Activated CD4-positive, alpha-beta T cell treated with anti-CD3 and anti-CD28 coated beads for 36 hours (primary cell): ENCODE measurements at regions of chr11 and their contacts with region 1.

Region 1: GRCh38 chr11:66958232-66958955 is at the start of gene PC:
- DNase-seq: peak; percentile 99
- ATAC-seq: peak; percentile 98
- H3K4me3 Mint-ChIP-seq: peak within 1 kb of the TSS; percentile 78
- H3K27ac Mint-ChIP-seq: peak within 1 kb of the TSS; percentile 90
- H3K4me1 Mint-ChIP-seq: peaks cover 18% of the 10 kb centered on the region
- H3K27me3 Mint-ChIP-seq: no peaks in the 10 kb centered on the region
- total RNA-seq, gene PC: 9.2 to 9.3 TPM

Region 2: DNA sequence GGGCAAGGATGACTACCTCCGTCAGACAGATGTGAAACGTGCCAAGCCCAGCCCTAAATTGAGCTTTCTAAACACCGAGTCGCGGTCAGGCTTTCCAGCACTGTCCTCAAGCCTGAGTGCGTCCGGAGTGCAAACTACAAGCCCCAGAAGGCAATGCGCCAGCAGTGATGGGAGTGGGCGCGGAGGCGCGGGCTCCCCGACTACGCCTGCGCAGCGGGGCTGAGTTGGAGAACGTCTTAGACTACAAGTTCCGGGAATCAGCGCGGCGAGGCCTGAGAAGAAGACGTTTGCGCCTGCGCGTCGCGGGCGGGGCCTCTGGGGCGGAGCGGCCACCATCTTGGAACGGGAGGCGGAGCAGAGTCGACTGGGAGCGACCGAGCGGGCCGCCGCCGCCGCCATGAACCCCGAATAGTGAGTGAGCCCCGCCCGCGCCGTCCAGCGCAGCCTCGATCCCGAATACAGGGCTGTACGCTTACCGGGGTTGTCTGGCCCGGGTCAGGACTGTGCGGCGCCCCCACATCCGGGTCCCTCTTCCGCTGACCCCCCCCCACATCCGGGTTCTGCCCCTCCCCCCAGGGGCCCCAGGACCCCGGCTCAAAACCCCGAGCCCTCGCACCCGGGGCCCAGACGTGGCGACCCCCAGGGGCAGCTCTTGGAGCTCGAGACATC is 690.0 kb before region 1 on chr11 and contains the start of gene RAB1B:
- CTCF ChIA-PET with region 1: no interaction called
- POLR2A ChIA-PET with region 1: no interaction called
- intact Hi-C with region 1: loop called in 1 of 2 experiments (anchors 2 kb)
- DNase-seq: peak; percentile 100
- ATAC-seq: peak; percentile 88
- H3K4me3 Mint-ChIP-seq: peak within 1 kb of the TSS; percentile 100
- H3K27ac Mint-ChIP-seq: peak within 1 kb of the TSS; percentile 97
- H3K4me1 Mint-ChIP-seq: peaks cover 28% of the 10 kb centered on the region
- H3K27me3 Mint-ChIP-seq: no peaks in the 10 kb centered on the region
- total RNA-seq, gene RAB1B: 114 to 147 TPM

Region 3: GRCh38 chr11:66510271-66510989 is 448.0 kb before region 1 on chr11 and contains the start of gene BBS1:
- CTCF ChIA-PET with region 1: interaction called, 3 read pairs
- POLR2A ChIA-PET with region 1: no interaction called
- intact Hi-C with region 1: loop called in 1 of 2 experiments (anchors 1 kb)
- DNase-seq: peak; percentile 88
- ATAC-seq: peak; percentile 98
- H3K4me3 Mint-ChIP-seq: peak within 1 kb of the TSS; percentile 86
- H3K27ac Mint-ChIP-seq: peak within 1 kb of the TSS; percentile 48
- H3K4me1 Mint-ChIP-seq: peaks cover 10% of the 10 kb centered on the region
- H3K27me3 Mint-ChIP-seq: no peaks in the 10 kb centered on the region
- total RNA-seq, gene BBS1: 9.4 to 10.7 TPM

Region 4: DNA sequence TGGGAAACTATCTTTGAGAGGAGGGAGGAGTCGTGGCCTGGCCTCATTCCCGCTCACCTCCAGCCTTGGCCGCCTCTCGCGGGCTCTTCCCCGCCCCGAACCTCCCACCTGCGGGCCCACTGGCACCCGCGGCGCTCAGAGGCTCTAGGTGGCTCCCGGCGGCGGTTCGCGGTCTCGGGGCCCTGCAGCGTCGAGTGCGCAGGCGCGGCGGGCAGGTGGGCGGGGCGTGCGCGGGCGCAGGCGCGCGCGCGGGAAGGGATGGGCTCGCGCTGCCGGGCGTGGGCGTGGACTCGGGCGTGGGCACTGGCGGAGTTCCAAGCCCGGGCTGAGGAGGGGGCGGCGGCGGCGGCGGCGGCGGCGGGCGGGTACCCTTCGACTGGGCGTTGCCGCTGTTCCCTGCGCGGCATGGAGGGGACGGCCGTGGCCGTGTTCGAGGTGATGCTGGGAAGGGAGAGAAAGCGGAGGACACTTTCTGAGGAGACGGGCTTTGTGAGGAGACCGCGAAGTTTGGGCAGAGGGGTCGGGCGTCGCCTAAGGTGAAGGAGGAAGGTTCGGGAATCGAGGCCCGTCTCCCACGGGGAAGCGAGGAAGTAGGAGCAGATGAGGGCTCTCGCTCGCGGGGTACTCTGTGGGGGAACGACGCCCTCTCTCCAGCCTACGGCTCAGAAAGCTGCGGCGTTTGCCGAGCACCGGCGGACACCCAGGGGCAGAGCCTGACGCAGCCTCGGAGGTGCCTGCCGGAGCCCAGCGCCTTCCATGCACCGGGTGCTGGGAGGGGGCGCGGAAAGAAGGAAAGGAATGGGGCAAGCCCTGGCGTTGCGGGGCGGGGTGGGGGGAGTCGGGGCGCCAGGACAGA is 213.7 kb before region 1 on chr11:
- CTCF ChIA-PET with region 1: no interaction called
- POLR2A ChIA-PET with region 1: no interaction called
- intact Hi-C with region 1: loop called in 1 of 2 experiments (anchors 1 kb)
- DNase-seq: peak; percentile 93
- ATAC-seq: peak; percentile 88
- H3K4me3 Mint-ChIP-seq: peak overlapping the region; percentile 95
- H3K27ac Mint-ChIP-seq: peak overlapping the region; percentile 84
- H3K4me1 Mint-ChIP-seq: peaks cover 7% of the 10 kb centered on the region
- H3K27me3 Mint-ChIP-seq: no peaks in the 10 kb centered on the region

Region 5: GRCh38 chr11:66891851-66892660 is 66.3 kb before region 1 on chr11:
- CTCF ChIA-PET with region 1: no interaction called
- POLR2A ChIA-PET with region 1: no interaction called
- intact Hi-C with region 1: loop called in 1 of 2 experiments (anchors 2 kb)
- DNase-seq: peak; percentile 85
- ATAC-seq: peak; percentile 100
- H3K4me3 Mint-ChIP-seq: no peak overlapping the region
- H3K27ac Mint-ChIP-seq: peak overlapping the region; percentile 8
- H3K4me1 Mint-ChIP-seq: peaks cover 8% of the 10 kb centered on the region
- H3K27me3 Mint-ChIP-seq: no peaks in the 10 kb centered on the region

Region 6: GRCh38 chr11:67118801-67119584 is 160.6 kb after region 1 on chr11 and contains the start of gene KDM2A:
- CTCF ChIA-PET with region 1: no interaction called
- POLR2A ChIA-PET with region 1: no interaction called
- intact Hi-C with region 1: loop called in 1 of 2 experiments (anchors 1 kb)
- DNase-seq: peak; percentile 100
- ATAC-seq: peak; percentile 85
- H3K4me3 Mint-ChIP-seq: peak within 1 kb of the TSS; percentile 98
- H3K27ac Mint-ChIP-seq: peak within 1 kb of the TSS; percentile 83
- H3K4me1 Mint-ChIP-seq: peaks cover 28% of the 10 kb centered on the region
- H3K27me3 Mint-ChIP-seq: no peaks in the 10 kb centered on the region
- total RNA-seq, gene KDM2A: 74.8 to 89.7 TPM

Region 7: DNA sequence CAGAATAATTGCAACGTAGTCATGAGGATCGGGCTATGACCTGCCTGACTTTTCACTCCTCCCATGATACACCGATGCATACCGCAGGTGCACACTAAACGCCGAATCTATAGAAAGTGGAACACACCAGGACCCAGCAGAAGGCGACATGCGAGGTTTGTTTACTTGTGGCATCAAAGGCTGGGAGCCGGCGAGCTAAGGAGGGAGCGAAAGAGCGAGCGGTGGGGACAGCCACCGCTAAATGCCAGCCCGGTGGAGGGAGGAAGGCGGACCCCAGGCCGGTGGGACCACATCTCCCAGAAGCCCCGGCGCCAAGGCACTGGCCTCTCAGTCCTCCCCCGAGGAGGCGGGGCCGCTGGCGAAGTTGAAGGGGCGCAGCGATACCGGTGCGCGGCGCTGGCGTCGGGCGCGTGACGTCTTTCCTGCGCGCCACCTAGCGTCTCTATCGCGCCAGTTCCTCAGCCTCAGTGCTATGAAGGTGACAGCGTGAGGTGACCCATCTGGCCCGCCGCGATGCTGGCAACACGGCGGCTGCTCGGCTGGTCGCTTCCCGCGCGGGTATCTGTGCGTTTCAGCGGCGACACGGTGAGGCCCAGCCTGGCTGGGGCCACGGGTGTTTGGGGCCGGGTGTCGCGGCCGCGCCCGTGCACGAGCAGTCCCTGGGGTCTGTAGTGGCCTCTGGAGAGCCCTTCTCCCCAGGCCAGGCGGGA is 648.3 kb after region 1 on chr11 and contains the start of gene NDUFV1:
- CTCF ChIA-PET with region 1: no interaction called
- POLR2A ChIA-PET with region 1: no interaction called
- intact Hi-C with region 1: loop called in 1 of 2 experiments (anchors 1 kb)
- DNase-seq: peak; percentile 98
- ATAC-seq: peak; percentile 100
- H3K4me3 Mint-ChIP-seq: peak within 1 kb of the TSS; percentile 92
- H3K27ac Mint-ChIP-seq: peak within 1 kb of the TSS; percentile 90
- H3K4me1 Mint-ChIP-seq: peaks cover 16% of the 10 kb centered on the region
- H3K27me3 Mint-ChIP-seq: peaks cover 9% of the 10 kb centered on the region
- total RNA-seq, gene NDUFV1: 253 to 287 TPM